ENCODE measurements at regions of chr3 and their contacts with region 1.

Region 1: GRCh38 chr3:63228087-63229023 is 49.8 kb upstream of the SYNPR start:
- DNase-seq: peak; percentile 16
- ATAC-seq: no peak
- H3K4me3 Mint-ChIP-seq: no peak overlapping the region
- H3K27ac Mint-ChIP-seq: no peak overlapping the region
- H3K4me1 Mint-ChIP-seq: no peaks in the 10 kb centered on the region
- H3K27me3 Mint-ChIP-seq: peaks cover 2% of the 10 kb centered on the region

Region 2: GRCh38 chr3:62201438-62202035 is 1026.8 kb before region 1 on chr3:
- CTCF ChIA-PET with region 1: no interaction called
- POLR2A ChIA-PET with region 1: no interaction called
- intact Hi-C with region 1: loop called in 1 of 2 experiments (anchors 5 kb)
- DNase-seq: no peak
- ATAC-seq: no peak
- H3K4me3 Mint-ChIP-seq: no peak overlapping the region
- H3K27ac Mint-ChIP-seq: no peak overlapping the region
- H3K4me1 Mint-ChIP-seq: no peaks in the 10 kb centered on the region
- H3K27me3 Mint-ChIP-seq: no peaks in the 10 kb centered on the region

Region 3: GRCh38 chr3:62332835-62333244 is 895.5 kb before region 1 on chr3:
- CTCF ChIA-PET with region 1: interaction called, 3 read pairs
- POLR2A ChIA-PET with region 1: no interaction called
- intact Hi-C with region 1: loop called in 1 of 2 experiments (anchors 5 kb)
- DNase-seq: no peak
- ATAC-seq: no peak
- H3K4me3 Mint-ChIP-seq: no peak overlapping the region
- H3K27ac Mint-ChIP-seq: no peak overlapping the region
- H3K4me1 Mint-ChIP-seq: no peaks in the 10 kb centered on the region
- H3K27me3 Mint-ChIP-seq: peaks cover 3% of the 10 kb centered on the region

Region 4: DNA sequence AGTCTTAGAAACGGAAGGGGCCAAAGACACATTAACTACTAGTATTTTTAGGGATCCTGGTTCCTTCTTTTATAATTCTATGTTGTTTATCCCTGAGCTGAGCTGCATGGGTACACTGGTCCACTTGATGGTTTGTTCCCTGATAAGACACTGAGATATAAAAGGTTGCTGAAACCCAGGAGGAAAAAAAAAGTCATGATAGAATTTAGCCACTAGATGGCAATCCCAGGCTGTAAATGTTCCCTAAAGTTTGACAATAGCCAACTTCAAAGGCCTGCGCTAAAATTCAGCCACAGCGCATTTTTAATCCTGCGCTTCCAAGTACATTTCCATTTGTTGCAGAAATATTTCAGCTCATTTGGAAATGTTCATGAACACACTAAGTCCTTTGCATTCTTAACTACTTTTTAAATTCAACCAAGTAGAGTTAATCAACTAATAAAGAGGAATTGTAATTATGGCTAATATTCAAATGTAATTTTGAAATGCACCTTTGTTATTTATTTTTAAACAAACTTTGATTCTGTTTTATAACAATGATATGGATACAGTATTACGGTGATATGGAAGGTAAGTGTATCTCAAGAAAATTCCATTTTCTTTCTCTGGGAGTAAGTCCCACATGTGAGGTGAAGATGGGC is 605.7 kb before region 1 on chr3:
- CTCF ChIA-PET with region 1: no interaction called
- POLR2A ChIA-PET with region 1: no interaction called
- intact Hi-C with region 1: loop called (anchors 1 to 2 kb)
- DNase-seq: peak; percentile 6
- ATAC-seq: no peak
- H3K4me3 Mint-ChIP-seq: no peak overlapping the region
- H3K27ac Mint-ChIP-seq: no peak overlapping the region
- H3K4me1 Mint-ChIP-seq: no peaks in the 10 kb centered on the region
- H3K27me3 Mint-ChIP-seq: peaks cover 17% of the 10 kb centered on the region

Region 5: DNA sequence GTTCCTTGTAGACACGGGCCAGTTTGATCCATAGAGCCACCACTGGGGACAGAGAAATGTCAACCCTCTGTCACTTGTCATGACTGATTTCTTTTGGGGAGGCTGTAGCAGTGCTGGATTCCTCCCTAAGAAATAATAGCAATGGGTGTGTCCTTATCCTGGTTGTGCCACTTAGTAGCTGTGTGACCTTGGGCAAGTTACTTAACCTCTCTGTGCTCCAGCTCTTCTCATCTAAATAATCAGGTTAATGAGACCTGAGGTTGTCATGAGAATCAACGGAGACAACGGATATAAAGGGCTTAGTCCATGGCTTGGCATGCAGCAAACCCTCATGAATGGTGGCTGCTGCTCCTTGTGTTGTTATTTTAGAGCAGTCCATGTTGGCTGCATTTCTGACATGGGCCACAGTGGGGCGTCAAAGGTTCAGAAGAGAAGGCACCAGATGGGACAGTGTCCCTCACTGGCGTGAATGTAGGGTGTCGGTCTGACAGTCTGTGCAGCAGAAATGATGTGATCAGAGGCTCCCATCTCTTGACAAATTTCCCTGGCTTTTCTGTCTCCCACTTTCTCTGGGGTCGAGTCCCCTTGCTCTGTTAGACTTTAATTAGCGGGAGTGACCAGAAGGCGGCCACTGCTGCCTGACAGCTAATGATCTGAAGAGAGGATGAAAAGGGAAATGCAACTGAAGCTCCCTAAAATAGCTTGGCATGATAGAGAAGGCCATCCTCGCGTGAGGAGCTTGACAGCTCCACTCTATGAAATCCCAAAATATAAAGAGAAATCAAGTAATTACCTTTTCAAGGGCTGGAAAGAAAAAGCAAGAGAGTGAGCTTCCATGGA is 562.5 kb before region 1 on chr3:
- CTCF ChIA-PET with region 1: interaction called, 3 read pairs
- POLR2A ChIA-PET with region 1: no interaction called
- intact Hi-C with region 1: loop called in 1 of 2 experiments (anchors 1 kb)
- DNase-seq: peak; percentile 64
- ATAC-seq: peak; percentile 47
- H3K4me3 Mint-ChIP-seq: no peak overlapping the region
- H3K27ac Mint-ChIP-seq: no peak overlapping the region
- H3K4me1 Mint-ChIP-seq: no peaks in the 10 kb centered on the region
- H3K27me3 Mint-ChIP-seq: no peaks in the 10 kb centered on the region